Activated T-helper 2 cell treated with anti-CD3 and anti-CD28 coated beads, Interferon-gamma antibody, Interleukin-2, Interleukin-4, amounts not matched to agents 10 μg/mL and 5 μg/mL and 100 μg/mL, durations not matched to agents 14 hours and 24 hours and 36 hours (primary cell): ENCODE measurements at regions of chr7 and their contacts with region 1.

Region 1: GRCh38 chr7:25565949-25566348 is 337.7 kb upstream of the NPVF start:
- DNase-seq: peak; percentile 53
- H3K4me3 Mint-ChIP-seq: no peak overlapping the region
- H3K27ac Mint-ChIP-seq: no peak overlapping the region
- H3K4me1 Mint-ChIP-seq: peaks cover 5% of the 10 kb centered on the region
- H3K27me3 Mint-ChIP-seq: peaks cover 6% of the 10 kb centered on the region

Region 2: GRCh38 chr7:25259587-25260243 is 306.2 kb before region 1 on chr7:
- intact Hi-C with region 1: loop called (anchors 1 kb)
- DNase-seq: peak; percentile 45
- H3K4me3 Mint-ChIP-seq: no peak overlapping the region
- H3K27ac Mint-ChIP-seq: no peak overlapping the region
- H3K4me1 Mint-ChIP-seq: peaks cover 26% of the 10 kb centered on the region
- H3K27me3 Mint-ChIP-seq: peaks cover 17% of the 10 kb centered on the region

Region 3: GRCh38 chr7:25389489-25390106 is 176.4 kb before region 1 on chr7:
- intact Hi-C with region 1: loop called (anchors 2 kb)
- DNase-seq: no peak
- H3K4me3 Mint-ChIP-seq: no peak overlapping the region
- H3K27ac Mint-ChIP-seq: no peak overlapping the region
- H3K4me1 Mint-ChIP-seq: no peaks in the 10 kb centered on the region
- H3K27me3 Mint-ChIP-seq: peaks cover 13% of the 10 kb centered on the region

Region 4: GRCh38 chr7:25959168-25959734 is 393.3 kb after region 1 on chr7:
- intact Hi-C with region 1: no loop called
- DNase-seq: no peak
- H3K4me3 Mint-ChIP-seq: no peak overlapping the region
- H3K27ac Mint-ChIP-seq: no peak overlapping the region
- H3K4me1 Mint-ChIP-seq: no peaks in the 10 kb centered on the region
- H3K27me3 Mint-ChIP-seq: peaks cover 53% of the 10 kb centered on the region